CD8-positive, alpha-beta T cell (primary cell): ENCODE measurements at regions of chr1 and their contacts with region 1.

Region 1: DNA sequence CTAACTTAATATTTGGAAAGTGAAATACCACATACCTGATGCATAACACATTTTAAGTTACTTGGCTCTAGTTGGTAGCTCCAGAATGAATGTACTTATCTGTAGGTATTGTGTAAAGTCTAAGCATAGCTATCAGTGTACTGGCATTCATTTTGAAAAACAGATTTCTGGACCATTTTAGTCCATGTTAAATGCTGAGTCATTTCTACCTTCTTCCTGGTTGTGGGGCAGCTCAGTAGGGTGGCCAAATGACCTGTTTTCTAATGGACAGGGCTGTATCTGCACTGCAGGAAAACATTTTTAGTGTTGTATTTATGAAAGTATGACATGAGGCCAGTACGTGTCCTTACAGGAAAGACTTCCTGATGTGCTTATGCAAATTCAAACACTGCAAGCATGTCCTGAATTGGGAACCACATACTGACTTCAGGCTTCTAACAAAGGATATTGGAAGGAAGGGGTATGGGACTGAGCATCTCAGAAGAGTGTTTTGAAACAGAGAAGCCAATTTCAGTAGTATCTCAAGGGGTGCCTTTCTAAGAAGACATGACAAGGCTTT is 300.3 kb upstream of the B3GALT2 start:
- DNase-seq: no peak
- ATAC-seq: no peak
- H3K4me3 ChIP-seq: no peak overlapping the region
- H3K4me3 Mint-ChIP-seq: no peak overlapping the region
- H3K27ac ChIP-seq: no peak overlapping the region
- H3K27ac Mint-ChIP-seq: peak overlapping the region; percentile 10
- H3K4me1 ChIP-seq: peaks cover 9% of the 10 kb centered on the region
- H3K4me1 Mint-ChIP-seq: peaks cover 19% of the 10 kb centered on the region
- H3K27me3 ChIP-seq: no peaks in the 10 kb centered on the region
- H3K27me3 Mint-ChIP-seq: no peaks in the 10 kb centered on the region
- CTCF ChIP-seq: no peak

Region 2: GRCh38 chr1:193471981-193472380 is 14.8 kb before region 1 on chr1:
- CTCF ChIA-PET with region 1: interaction called, 3 read pairs
- POLR2A ChIA-PET with region 1: no interaction called
- intact Hi-C with region 1: loop called in 1 of 2 experiments (anchors 1 kb)
- DNase-seq: no peak
- ATAC-seq: no peak
- H3K4me3 ChIP-seq: no peak overlapping the region
- H3K4me3 Mint-ChIP-seq: no peak overlapping the region
- H3K27ac ChIP-seq: no peak overlapping the region
- H3K27ac Mint-ChIP-seq: peak overlapping the region; percentile 8
- H3K4me1 ChIP-seq: no peaks in the 10 kb centered on the region
- H3K4me1 Mint-ChIP-seq: peaks cover 22% of the 10 kb centered on the region
- H3K27me3 ChIP-seq: no peaks in the 10 kb centered on the region
- H3K27me3 Mint-ChIP-seq: no peaks in the 10 kb centered on the region
- CTCF ChIP-seq: no peak

Region 3: GRCh38 chr1:193539731-193540459 is 53.1 kb after region 1 on chr1:
- CTCF ChIA-PET with region 1: no interaction called
- POLR2A ChIA-PET with region 1: no interaction called
- intact Hi-C with region 1: no loop called
- DNase-seq: peak in 5 of 9 experiments; percentile 2 to 33 (median 24)
- ATAC-seq: peak; percentile 43
- H3K4me3 ChIP-seq: peak overlapping the region in 1 of 2 experiments; percentile 41
- H3K4me3 Mint-ChIP-seq: peak overlapping the region; percentile 76
- H3K27ac ChIP-seq: peak overlapping the region; percentile 13 to 77
- H3K27ac Mint-ChIP-seq: peak overlapping the region; percentile 75
- H3K4me1 ChIP-seq: no peaks in the 10 kb centered on the region
- H3K4me1 Mint-ChIP-seq: peaks cover 36% of the 10 kb centered on the region
- H3K27me3 ChIP-seq: no peaks in the 10 kb centered on the region
- H3K27me3 Mint-ChIP-seq: no peaks in the 10 kb centered on the region
- CTCF ChIP-seq: no peak